Caco-2 (cell line): ENCODE measurements at regions of chr16 and their contacts with region 1.

Region 1: DNA sequence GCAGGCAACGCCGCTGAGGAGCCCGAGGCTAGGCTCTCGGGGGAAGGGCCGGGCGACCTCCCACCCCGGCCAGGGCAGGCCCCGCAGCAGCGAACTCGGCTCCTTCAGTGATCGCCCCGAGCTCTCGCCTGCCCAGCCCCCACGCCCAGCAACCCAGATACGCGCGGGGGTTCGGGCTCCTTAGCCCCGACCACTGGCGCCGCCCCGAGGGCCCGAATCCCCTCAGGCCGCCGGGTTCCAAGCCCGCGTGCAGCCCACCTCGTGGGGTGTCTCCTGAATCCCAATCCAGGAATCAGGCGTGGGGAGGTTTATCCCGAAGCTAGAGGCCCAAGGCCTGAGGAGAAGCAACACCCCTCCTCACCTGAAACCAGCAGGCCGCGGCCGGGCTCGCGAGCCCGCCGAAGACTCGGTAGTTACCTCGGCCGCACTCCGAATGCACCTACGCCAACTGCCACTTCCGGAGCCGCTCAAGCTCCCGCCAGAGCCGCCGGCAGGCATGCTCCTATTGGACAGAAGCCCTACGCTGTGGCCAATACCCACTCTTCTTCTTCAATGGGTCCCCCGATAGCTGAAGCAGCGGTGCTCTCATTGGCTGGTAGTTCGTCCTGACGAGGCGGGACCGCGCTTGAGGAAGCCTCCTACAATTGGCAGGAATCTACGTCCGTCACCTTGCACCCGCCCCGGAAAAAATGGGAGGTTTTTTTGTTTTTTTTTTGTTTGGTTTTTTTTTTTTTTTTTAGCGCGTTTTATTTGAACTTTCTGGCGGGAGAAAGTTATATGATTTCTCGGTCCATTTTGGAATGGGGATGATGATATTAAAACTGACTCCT is at the start of gene RFWD3:
- DNase-seq: peak; percentile 99 to 100
- H3K4me3 ChIP-seq: peak within 1 kb of the TSS; percentile 65
- H3K4me3 Mint-ChIP-seq: peak within 1 kb of the TSS; percentile 95
- H3K27ac Mint-ChIP-seq: peak within 1 kb of the TSS; percentile 98
- H3K4me1 ChIP-seq: peaks cover 8% of the 10 kb centered on the region
- H3K4me1 Mint-ChIP-seq: peaks cover 18% of the 10 kb centered on the region
- H3K27me3 ChIP-seq: no peaks in the 10 kb centered on the region
- H3K27me3 Mint-ChIP-seq: no peaks in the 10 kb centered on the region
- CTCF ChIP-seq: no peak
- total RNA-seq, gene RFWD3: 111 and 118 TPM in 2 replicates

Region 2: DNA sequence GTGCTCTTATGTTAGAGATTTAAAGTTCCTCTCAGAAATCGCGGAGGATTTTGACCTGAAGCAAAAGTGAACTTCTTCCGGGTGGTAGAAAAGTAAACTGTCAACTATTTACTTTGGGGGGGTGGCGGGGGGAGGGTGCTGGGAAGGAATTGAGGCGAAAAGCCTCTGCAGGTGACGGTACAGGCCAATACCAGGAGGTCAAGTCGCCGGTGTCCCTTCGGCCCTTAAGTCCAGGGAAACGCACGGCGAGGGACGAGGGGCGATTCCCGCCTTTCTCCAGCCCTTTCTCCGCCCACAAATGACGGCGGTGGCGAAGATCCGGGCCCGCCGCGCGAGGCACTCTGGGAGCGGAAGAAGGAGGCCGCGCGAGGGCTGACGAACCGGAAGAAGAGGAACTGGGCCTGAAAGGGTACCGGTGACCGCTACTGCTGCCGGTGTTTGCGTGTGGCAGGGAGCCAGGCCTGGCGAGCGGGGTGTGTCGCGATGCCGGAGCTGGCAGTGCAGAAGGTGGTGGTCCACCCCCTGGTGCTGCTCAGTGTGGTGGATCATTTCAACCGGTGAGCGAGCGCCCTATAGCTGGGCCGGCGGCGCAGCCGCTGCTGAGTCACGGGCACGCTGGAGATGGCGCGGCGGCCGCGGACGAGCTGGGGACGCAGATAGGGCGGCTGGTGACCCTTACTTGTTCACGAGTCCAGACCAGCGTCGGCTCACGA is 370.1 kb before region 1 on chr16 and contains the start of gene PSMD7:
- CTCF ChIA-PET with region 1: interaction called, 7 read pairs
- POLR2A ChIA-PET with region 1: interaction called, 10 read pairs
- intact Hi-C with region 1: no loop called
- DNase-seq: peak; percentile 96 to 97
- H3K4me3 ChIP-seq: peak within 1 kb of the TSS; percentile 86
- H3K4me3 Mint-ChIP-seq: peak within 1 kb of the TSS; percentile 87
- H3K27ac Mint-ChIP-seq: peak within 1 kb of the TSS; percentile 93
- H3K4me1 ChIP-seq: peaks cover 10% of the 10 kb centered on the region
- H3K4me1 Mint-ChIP-seq: peaks cover 10% of the 10 kb centered on the region
- H3K27me3 ChIP-seq: no peaks in the 10 kb centered on the region
- H3K27me3 Mint-ChIP-seq: no peaks in the 10 kb centered on the region
- CTCF ChIP-seq: no peak
- total RNA-seq, gene PSMD7: 182 and 191 TPM in 2 replicates

Region 3: DNA sequence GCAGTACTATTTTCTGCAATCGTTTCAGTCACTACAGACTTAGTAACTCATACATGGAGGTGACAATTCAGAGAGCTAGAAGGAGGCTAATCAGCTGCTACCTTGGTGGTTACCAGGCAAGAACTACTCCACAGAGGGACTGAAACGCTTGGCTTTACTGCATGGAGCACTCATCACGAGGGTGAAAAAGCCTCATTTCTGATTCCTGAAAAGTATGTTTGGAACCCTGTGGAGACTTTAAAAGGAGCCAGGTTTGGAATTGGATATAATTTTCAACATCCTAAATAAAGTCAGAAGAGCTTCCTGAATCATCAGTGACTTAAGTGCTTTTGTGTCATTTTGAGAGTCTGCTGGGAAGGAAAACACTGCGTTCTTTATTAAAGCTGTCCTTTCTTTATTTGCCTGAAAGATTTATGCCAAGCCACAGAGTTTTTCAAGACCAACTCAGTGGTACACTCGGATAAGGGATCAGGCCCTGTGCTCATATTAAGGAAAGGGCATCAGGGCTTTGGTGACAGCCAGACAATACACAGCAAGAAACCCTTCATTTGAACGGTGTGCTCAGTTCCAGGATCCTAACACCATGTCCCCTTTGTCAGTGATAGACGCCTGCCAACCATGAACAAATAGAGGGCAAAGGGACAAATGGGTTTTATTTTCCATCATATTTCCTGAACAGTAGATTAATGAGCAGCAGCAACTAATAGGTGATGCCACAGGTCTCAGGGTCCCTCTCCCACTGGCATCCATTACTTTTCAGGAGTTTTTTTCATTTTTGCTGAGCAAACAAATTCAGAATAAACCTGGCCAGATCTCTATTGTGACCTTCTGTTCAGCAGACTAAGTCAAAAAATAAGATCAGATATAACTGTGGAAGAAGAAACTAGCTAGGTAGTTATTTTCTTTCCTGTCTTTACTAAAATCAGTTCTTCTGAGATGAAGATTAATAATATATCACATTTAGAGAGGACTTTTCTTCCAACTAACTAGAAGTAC is 164.9 kb before region 1 on chr16:
- CTCF ChIA-PET with region 1: no interaction called
- POLR2A ChIA-PET with region 1: no interaction called
- intact Hi-C with region 1: no loop called
- DNase-seq: no peak
- H3K4me3 ChIP-seq: no peak overlapping the region
- H3K4me3 Mint-ChIP-seq: no peak overlapping the region
- H3K27ac Mint-ChIP-seq: no peak overlapping the region
- H3K4me1 ChIP-seq: no peaks in the 10 kb centered on the region
- H3K4me1 Mint-ChIP-seq: no peaks in the 10 kb centered on the region
- H3K27me3 ChIP-seq: no peaks in the 10 kb centered on the region
- H3K27me3 Mint-ChIP-seq: no peaks in the 10 kb centered on the region
- CTCF ChIP-seq: no peak

Region 4: DNA sequence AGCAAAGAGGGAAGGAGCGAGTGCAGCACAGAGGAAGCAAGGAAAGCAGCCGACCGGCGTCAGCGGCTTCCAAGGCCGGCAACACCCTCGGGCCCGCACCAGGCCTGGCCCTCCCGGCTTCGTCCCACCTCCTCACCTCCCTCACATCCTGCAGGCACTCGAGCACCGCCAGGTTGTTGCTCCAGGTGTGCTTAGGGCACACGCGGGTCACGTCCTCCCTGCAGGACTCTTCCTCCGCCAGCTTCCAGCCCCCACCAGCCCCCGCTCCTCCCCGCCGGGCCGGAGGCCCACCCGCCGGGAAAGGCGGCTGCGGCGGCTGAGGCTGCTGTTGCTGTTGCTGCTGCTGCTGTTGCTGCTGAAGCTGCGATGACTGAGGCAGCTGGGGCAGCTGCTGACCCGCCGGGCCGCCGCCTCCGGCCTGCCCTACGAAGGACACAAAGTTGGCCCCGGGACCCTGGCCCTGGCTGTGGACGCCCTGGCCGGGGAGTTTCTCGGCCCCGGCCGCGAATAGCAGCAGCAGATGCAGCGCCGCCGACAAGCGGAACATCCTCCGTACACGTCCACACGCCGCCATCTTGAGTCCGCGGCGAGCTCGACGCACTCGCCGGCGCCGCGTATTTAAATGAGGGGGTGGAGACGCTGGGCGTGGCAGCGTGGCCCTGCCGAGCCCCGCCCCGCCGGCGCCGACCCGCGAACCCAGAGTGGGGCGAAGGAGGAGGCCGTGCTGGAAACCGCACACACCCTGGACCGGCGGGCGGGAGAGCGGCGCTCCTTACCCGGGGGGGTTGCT is 59.9 kb before region 1 on chr16 and contains the start of gene GLG1:
- CTCF ChIA-PET with region 1: no interaction called
- POLR2A ChIA-PET with region 1: interaction called, 17 read pairs
- intact Hi-C with region 1: no loop called
- DNase-seq: peak; percentile 91 to 95
- H3K4me3 ChIP-seq: peak within 1 kb of the TSS; percentile 92
- H3K4me3 Mint-ChIP-seq: peak within 1 kb of the TSS; percentile 100
- H3K27ac Mint-ChIP-seq: peak within 1 kb of the TSS; percentile 99
- H3K4me1 ChIP-seq: peaks cover 22% of the 10 kb centered on the region
- H3K4me1 Mint-ChIP-seq: peaks cover 14% of the 10 kb centered on the region
- H3K27me3 ChIP-seq: no peaks in the 10 kb centered on the region
- H3K27me3 Mint-ChIP-seq: no peaks in the 10 kb centered on the region
- CTCF ChIP-seq: no peak
- total RNA-seq, gene GLG1: 197 and 210 TPM in 2 replicates

Region 5: GRCh38 chr16:74695450-74696422 is 29.1 kb after region 1 on chr16:
- CTCF ChIA-PET with region 1: interaction called, 3 read pairs
- POLR2A ChIA-PET with region 1: interaction called, 45 read pairs
- intact Hi-C with region 1: loop called (anchors 2 kb)
- DNase-seq: peak; percentile 89 to 92
- H3K4me3 ChIP-seq: peak overlapping the region; percentile 36
- H3K4me3 Mint-ChIP-seq: peak overlapping the region; percentile 93
- H3K27ac Mint-ChIP-seq: peak overlapping the region; percentile 60
- H3K4me1 ChIP-seq: no peaks in the 10 kb centered on the region
- H3K4me1 Mint-ChIP-seq: peaks cover 15% of the 10 kb centered on the region
- H3K27me3 ChIP-seq: no peaks in the 10 kb centered on the region
- H3K27me3 Mint-ChIP-seq: no peaks in the 10 kb centered on the region
- CTCF ChIP-seq: no peak

Region 6: DNA sequence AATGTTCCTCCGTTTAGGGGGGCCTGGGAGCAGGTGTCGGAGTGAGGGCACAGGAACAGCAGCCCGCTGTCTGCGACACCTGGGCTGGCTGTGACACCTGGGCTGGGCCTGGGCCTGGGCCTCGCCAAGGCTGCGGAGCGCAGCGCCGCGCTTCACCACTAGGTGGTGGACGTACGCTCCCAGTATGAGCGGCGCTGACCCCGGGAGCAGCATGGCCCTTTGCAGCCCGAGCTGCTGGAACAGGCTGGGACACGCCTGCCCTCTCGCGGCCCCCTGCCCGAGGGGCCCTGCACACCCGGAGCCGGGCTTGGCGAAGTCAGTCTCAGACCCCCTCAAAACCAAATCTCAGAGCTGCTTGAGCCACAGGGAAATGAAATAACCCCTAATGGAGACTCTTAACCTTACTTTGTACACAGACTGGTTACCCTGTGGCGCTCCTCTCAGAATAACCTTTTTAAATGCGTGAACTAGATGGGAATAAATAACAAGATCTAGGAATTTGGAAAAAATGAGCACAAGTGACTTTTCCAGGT is 146.5 kb after region 1 on chr16:
- CTCF ChIA-PET with region 1: no interaction called
- POLR2A ChIA-PET with region 1: interaction called, 3 read pairs
- intact Hi-C with region 1: loop called (anchors 5 kb)
- DNase-seq: peak; percentile 94 to 97
- H3K4me3 ChIP-seq: no peak overlapping the region
- H3K4me3 Mint-ChIP-seq: peak overlapping the region; percentile 12
- H3K27ac Mint-ChIP-seq: no peak overlapping the region
- H3K4me1 ChIP-seq: peaks cover 51% of the 10 kb centered on the region
- H3K4me1 Mint-ChIP-seq: peaks cover 34% of the 10 kb centered on the region
- H3K27me3 ChIP-seq: no peaks in the 10 kb centered on the region
- H3K27me3 Mint-ChIP-seq: no peaks in the 10 kb centered on the region
- CTCF ChIP-seq: peak; percentile 99